ENCODE measurements at regions of chr12 and their contacts with region 1.

Region 1: DNA sequence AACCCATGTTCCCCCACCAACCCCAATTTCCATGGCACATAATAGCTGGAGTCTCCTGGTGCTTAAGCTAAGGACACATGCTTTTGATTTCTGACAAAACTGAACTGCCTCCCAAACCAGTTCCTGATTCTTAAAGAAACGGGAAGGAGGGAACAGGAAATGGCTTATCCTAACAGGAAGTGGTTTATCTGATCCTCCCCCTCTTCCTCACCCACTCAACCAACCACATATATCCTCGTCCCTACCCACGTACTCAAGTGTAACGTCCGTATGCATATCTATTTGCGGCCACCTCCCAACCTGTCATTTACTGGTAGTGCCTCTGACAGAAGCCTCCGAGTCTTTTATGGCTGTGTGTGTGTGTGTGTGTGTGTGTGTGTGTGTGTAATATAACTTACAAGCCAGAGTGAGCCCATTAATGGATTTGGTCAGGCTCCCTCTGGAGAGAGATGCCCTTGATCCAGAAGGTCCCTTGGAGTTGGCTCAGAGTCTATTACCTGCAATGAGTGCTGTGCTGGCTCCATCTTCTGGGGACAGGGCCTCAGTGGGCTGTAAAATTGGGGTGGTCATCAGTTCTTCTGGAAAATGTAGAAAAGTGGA is 7.7 kb downstream of the DAZAP2 start:
- DNase-seq: peak in 7 of 10 donors; percentile 16 to 69 (median 42)
- ATAC-seq: peak; percentile 49 to 75
- H3K4me3 Mint-ChIP-seq: peak overlapping the region; percentile 10 to 50 (median 30)
- H3K27ac Mint-ChIP-seq: peak overlapping the region; percentile 69 to 96 (median 92)
- H3K4me1 Mint-ChIP-seq: peaks cover 40 to 69% (median 64%) of the 10 kb centered on the region in 4 donors
- H3K27me3 Mint-ChIP-seq: no peaks in the 10 kb centered on the region

Region 2: DNA sequence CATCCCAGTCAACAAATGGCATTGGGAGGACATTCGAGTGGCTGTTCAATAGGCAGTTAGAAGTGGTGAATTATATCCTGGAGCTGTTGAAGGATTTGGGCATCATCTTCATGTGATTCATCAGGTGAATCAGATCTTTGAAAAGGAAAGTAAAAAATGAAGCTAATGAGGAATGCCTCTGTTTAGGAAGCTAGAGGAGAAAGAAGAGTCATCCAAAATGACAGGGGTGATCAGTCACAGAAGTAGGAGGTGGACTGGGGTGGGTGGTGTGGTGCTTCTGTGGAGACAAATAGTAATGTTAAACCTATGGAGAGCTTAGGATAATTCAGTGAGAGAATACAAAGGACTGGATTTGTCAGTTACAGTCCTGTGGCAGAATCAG is 708.8 kb before region 1 on chr12:
- POLR2A ChIA-PET with region 1: interaction called, 10 read pairs
- DNase-seq: no peak
- ATAC-seq: no peak
- H3K4me3 Mint-ChIP-seq: peak overlapping the region in 1 of 10 donors; percentile 17
- H3K27ac Mint-ChIP-seq: peak overlapping the region in 4 of 10 donors; percentile 2 to 56 (median 25)
- H3K4me1 Mint-ChIP-seq: peaks cover 13 to 45% (median 30%) of the 10 kb centered on the region in 4 donors
- H3K27me3 Mint-ChIP-seq: no peaks in the 10 kb centered on the region

Region 3: DNA sequence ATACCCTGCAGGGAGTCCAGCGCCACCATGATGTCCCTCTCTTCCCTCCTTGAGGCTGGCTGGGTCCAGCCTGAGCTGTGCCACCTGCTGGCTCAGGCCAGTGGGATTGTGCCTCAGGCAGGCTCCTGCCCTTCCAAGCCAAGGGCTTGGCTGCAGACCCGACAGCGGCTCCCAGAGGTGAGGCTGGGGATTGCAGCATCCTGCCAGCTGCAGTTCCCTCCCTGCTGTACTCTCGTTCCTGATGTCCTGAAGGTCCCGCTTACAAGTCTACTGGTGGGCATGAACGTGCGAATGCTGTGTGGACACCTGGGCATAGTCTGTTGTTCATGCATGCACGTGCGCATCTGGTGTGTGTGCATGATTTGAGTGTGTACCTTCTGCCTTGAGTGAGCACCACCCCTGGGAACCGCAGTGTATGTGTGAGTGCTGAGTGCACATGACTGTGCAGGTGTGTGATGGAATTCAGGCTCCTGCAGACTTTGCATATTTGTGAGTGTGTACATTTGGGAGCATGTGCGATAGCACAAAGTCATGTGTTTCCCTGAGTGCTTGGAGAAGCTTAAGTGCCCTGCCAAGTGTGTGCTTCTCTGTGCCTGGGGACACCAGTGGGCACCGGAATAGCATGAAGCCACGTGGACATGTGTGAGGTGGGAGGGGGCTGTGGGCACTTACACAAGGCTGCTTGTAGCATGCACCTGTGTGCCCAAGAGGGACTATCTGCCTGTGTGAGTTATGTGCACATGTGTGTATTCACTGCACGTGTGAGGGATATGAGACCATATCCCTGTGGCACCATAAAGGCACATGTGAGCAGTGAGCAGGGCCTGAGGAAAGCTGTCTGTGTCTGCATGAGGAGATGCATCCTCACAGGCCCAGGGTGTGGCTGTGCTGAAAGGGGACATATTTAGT is 967.4 kb after region 1 on chr12:
- POLR2A ChIA-PET with region 1: no interaction called
- DNase-seq: peak in 9 of 10 donors; percentile 7 to 62 (median 27)
- ATAC-seq: peak; percentile 47 to 52
- H3K4me3 Mint-ChIP-seq: no peak overlapping the region
- H3K27ac Mint-ChIP-seq: no peak overlapping the region
- H3K4me1 Mint-ChIP-seq: no peaks in the 10 kb centered on the region
- H3K27me3 Mint-ChIP-seq: peaks cover 10 to 21% (median 16%) of the 10 kb centered on the region in 5 donors

Measured in naive thymus-derived CD8-positive, alpha-beta T cell (primary cell).